H1 (cell line): ENCODE measurements at regions of chr4 and their contacts with region 1.

Region 1: GRCh38 chr4:165112368-165113139 is at the start of gene TMEM192:
- DNase-seq: peak; percentile 73 to 97
- H3K4me3 ChIP-seq: peak within 1 kb of the TSS; percentile 66 to 86 (median 74)
- H3K27ac ChIP-seq: peak within 1 kb of the TSS; percentile 13; the same call in 1 of the 2 replicates
- H3K4me1 ChIP-seq: peaks cover 0 to 3% (median 0%) of the 10 kb centered on the region in 4 experiments; a peak in 1 of 7 replicates
- H3K27me3 ChIP-seq: peaks cover 0 to 1% (median 0%) of the 10 kb centered on the region in 4 experiments; a peak in 1 of 7 replicates
- CTCF ChIP-seq: peak; percentile 11 to 39 (median 25); a peak in 3 of 4 replicates
- EP300 ChIP-seq: no peak
- POLR2A ChIP-seq: peak; percentile 72 to 85
- RAD21 ChIP-seq: no peak
- total RNA-seq, gene TMEM192: 10.2 and 10.9 TPM in 2 replicates

Region 2: GRCh38 chr4:165124463-165124862 is 11.9 kb after region 1 on chr4:
- CTCF ChIA-PET with region 1: interaction called, 16 read pairs
- POLR2A ChIA-PET with region 1: interaction called, 3 read pairs
- DNase-seq: no peak
- H3K4me3 ChIP-seq: no peak overlapping the region
- H3K27ac ChIP-seq: no peak overlapping the region
- H3K4me1 ChIP-seq: no peaks in the 10 kb centered on the region
- H3K27me3 ChIP-seq: no peaks in the 10 kb centered on the region
- CTCF ChIP-seq: no peak
- EP300 ChIP-seq: no peak
- POLR2A ChIP-seq: no peak
- RAD21 ChIP-seq: no peak